ENCODE measurements at regions of chr11 and their contacts with region 1.

Region 1: GRCh38 chr11:57800444-57801182 is 39.0 kb downstream of the CTNND1 start:
- DNase-seq: peak in 1 of 2 donors; percentile 82
- ATAC-seq: peak; percentile 87 to 98 (median 95)
- H3K4me3 ChIP-seq: no peak overlapping the region
- H3K4me3 Mint-ChIP-seq: no peak overlapping the region
- H3K27ac ChIP-seq: peak overlapping the region; percentile 37
- H3K27ac Mint-ChIP-seq: peak overlapping the region; percentile 70 to 81
- H3K4me1 ChIP-seq: peaks cover 3% of the 10 kb centered on the region
- H3K4me1 Mint-ChIP-seq: peaks cover 9 to 11% of the 10 kb centered on the region in 2 donors
- H3K27me3 ChIP-seq: no peaks in the 10 kb centered on the region
- H3K27me3 Mint-ChIP-seq: no peaks in the 10 kb centered on the region
- CTCF ChIP-seq: peak; percentile 86

Region 2: GRCh38 chr11:57456960-57457642 is 343.5 kb before region 1 on chr11:
- intact Hi-C with region 1: loop called (anchors 1 kb)
- DNase-seq: peak; percentile 73 to 85
- ATAC-seq: peak; percentile 77 to 80 (median 78)
- H3K4me3 ChIP-seq: no peak overlapping the region
- H3K4me3 Mint-ChIP-seq: peak overlapping the region; percentile 73
- H3K27ac ChIP-seq: no peak overlapping the region
- H3K27ac Mint-ChIP-seq: no peak overlapping the region
- H3K4me1 ChIP-seq: peaks cover 41% of the 10 kb centered on the region
- H3K4me1 Mint-ChIP-seq: peaks cover 24 to 39% of the 10 kb centered on the region in 2 donors
- H3K27me3 ChIP-seq: peaks cover 33% of the 10 kb centered on the region
- H3K27me3 Mint-ChIP-seq: peaks cover 23 to 28% of the 10 kb centered on the region in 2 donors
- CTCF ChIP-seq: peak; percentile 95

Region 3: GRCh38 chr11:57567515-57568329 is 232.9 kb before region 1 on chr11 and contains the start of gene UBE2L6:
- intact Hi-C with region 1: loop called (anchors 1 kb)
- DNase-seq: peak; percentile 56 to 95
- ATAC-seq: peak; percentile 76 to 91 (median 78)
- H3K4me3 ChIP-seq: peak within 1 kb of the TSS; percentile 99
- H3K4me3 Mint-ChIP-seq: peak within 1 kb of the TSS; percentile 99
- H3K27ac ChIP-seq: peak within 1 kb of the TSS; percentile 95
- H3K27ac Mint-ChIP-seq: peak within 1 kb of the TSS; percentile 96 to 99
- H3K4me1 ChIP-seq: peaks cover 24% of the 10 kb centered on the region
- H3K4me1 Mint-ChIP-seq: peaks cover 40 to 50% of the 10 kb centered on the region in 2 donors
- H3K27me3 ChIP-seq: no peaks in the 10 kb centered on the region
- H3K27me3 Mint-ChIP-seq: no peaks in the 10 kb centered on the region
- CTCF ChIP-seq: peak; percentile 93
- total RNA-seq, gene UBE2L6: 89.1 to 108 (median 103) TPM

Region 4: DNA sequence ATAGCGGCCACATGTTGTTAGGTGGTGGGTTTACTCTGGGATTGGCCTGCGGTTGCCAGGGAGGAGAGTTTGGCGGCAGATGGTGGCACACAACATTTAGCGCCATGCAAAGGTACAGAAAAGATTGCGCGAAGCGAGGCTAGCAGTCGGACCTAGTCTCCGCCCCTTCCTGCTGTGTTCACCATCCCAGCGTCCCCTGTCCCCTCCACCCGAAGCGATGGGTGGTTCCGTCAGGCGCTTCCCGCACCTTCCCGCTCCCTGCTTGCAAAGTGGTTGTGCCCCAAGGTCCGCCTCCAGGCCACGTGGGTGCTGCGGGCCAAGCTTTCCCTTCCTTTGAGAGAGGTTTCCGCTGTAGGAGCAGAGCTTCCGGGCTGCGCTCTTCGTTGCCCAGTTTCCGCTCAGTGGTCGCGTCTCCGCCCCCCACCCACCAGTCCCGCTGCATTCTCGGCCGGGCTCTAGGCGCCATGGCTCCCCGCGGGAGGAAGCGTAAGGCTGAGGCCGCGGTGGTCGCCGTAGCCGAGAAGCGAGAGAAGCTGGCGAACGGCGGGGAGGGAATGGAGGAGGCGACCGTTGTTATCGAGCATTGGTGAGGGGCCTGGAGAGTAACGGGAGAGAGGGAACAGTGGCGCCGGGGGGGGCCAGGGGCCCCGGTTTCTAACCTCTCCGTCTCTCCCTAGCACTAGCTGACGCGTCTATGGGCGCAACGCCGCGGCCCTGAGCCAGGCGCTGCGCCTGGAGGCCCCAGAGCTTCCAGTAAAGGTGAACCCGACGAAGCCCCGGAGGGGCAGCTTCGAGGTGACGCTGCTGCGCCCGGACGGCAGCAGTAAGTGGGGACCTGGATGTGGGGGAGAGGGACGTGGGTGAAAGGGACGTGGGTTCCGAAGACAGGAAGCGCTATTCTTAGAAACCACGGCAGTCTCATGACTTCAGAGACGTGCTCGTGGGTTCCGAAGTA is 59.2 kb before region 1 on chr11 and contains the start of gene SELENOH:
- intact Hi-C with region 1: loop called (anchors 1 kb)
- DNase-seq: peak; percentile 81 to 96
- ATAC-seq: peak; percentile 84 to 91 (median 86)
- H3K4me3 ChIP-seq: peak within 1 kb of the TSS; percentile 94
- H3K4me3 Mint-ChIP-seq: peak within 1 kb of the TSS; percentile 99
- H3K27ac ChIP-seq: peak within 1 kb of the TSS; percentile 97
- H3K27ac Mint-ChIP-seq: peak within 1 kb of the TSS; percentile 99
- H3K4me1 ChIP-seq: peaks cover 17% of the 10 kb centered on the region
- H3K4me1 Mint-ChIP-seq: peaks cover 18 to 30% of the 10 kb centered on the region in 2 donors
- H3K27me3 ChIP-seq: no peaks in the 10 kb centered on the region
- H3K27me3 Mint-ChIP-seq: no peaks in the 10 kb centered on the region
- CTCF ChIP-seq: no peak
- total RNA-seq, gene SELENOH: 55.3 to 83.3 (median 61.0) TPM